Caco-2 (cell line): ENCODE measurements at regions of chr6 and their contacts with region 1.

Region 1: DNA sequence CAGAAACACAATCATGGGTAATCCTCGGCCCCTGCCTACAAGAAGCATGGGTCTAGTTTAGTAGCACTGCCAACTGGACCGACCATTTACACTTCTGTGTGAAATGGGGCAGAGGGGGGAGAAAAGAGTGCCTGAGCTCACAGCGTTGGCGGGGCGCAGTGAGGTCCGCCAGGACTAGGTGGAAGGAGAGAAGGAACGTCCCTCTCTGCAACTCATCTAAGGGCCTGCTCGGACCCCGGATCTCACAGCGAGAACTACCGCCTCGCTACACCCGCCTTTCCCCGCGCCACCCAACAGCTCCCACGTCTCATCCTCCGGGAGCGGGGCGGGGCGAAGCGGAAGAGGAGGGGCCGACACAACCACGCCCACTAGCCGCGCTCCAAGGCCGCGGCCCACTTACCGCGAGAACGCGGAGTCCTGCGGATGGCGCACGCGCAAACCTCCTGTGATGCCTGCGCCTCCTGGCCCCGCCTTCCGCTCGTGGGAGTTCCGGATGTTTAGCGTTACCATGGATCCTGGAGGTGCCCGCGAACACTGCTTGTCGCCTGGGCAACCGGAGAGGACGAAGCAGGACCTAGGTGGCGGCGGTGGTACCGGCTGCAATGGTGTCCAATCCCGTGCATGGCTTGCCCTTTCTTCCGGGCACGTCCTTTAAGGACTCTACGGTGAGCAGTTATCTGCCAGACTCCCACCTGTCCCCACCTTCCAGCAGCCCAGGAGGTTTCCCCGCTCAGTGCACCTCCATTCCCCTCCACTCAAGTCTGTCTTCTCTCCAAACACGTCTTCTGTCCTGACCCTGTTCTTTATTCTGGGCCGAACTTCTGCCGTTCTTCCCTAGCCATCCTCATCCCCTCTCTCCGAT is at the start of gene EFHC1:
- DNase-seq: peak; percentile 97 to 98
- H3K4me3 ChIP-seq: peak within 1 kb of the TSS; percentile 69
- H3K4me3 Mint-ChIP-seq: no peak within 1 kb of the TSS
- H3K27ac Mint-ChIP-seq: no peak within 1 kb of the TSS
- H3K4me1 ChIP-seq: peaks cover 32% of the 10 kb centered on the region
- H3K4me1 Mint-ChIP-seq: peaks cover 19% of the 10 kb centered on the region
- H3K27me3 ChIP-seq: no peaks in the 10 kb centered on the region
- H3K27me3 Mint-ChIP-seq: no peaks in the 10 kb centered on the region
- CTCF ChIP-seq: no peak
- total RNA-seq, gene EFHC1: 12.2 and 14.6 TPM in 2 replicates

Region 2: GRCh38 chr6:52407467-52407866 is 12.6 kb before region 1 on chr6:
- CTCF ChIA-PET with region 1: interaction called, 10 read pairs
- POLR2A ChIA-PET with region 1: no interaction called
- intact Hi-C with region 1: no loop called
- DNase-seq: peak in 1 of 2 experiments; percentile 50
- H3K4me3 ChIP-seq: no peak overlapping the region
- H3K4me3 Mint-ChIP-seq: no peak overlapping the region
- H3K27ac Mint-ChIP-seq: no peak overlapping the region
- H3K4me1 ChIP-seq: no peaks in the 10 kb centered on the region
- H3K4me1 Mint-ChIP-seq: peaks cover 2% of the 10 kb centered on the region
- H3K27me3 ChIP-seq: no peaks in the 10 kb centered on the region
- H3K27me3 Mint-ChIP-seq: no peaks in the 10 kb centered on the region
- CTCF ChIP-seq: peak; percentile 45 to 51

Region 3: DNA sequence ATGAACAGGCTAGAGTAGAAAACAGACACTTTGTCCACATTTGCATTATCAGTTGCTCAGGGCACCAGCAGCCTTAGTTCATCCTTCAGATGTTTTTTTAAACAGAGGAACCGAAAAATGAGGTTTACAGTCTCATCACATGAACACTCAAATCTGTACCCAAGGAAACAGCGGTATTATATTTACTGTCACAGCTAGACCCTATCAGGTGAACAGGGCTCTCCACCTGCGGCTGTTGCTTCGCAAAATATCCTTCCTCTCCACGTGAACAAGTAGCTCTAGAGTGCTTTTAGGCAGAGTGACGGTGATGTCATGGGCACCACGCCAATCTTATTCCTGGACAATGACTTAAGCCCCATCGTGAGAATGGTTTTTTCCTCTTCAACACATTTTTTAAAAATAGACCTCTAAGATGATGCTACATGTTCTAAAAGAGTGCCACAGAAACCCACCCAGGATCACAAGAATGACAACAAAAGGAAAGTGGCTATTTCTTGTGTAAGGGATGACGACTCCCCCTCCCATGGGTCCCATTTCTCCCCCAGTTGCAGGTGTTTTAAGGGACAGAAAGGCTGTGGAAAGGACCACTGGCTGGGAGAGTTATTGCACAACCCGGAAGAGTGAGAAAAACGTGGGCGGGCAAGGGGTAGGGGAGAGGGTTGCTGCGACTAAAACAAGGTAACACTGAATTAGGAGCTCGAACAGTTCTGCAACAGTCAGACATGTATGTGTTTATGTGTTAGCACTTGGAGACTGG is 77.8 kb after region 1 on chr6:
- CTCF ChIA-PET with region 1: no interaction called
- POLR2A ChIA-PET with region 1: no interaction called
- intact Hi-C with region 1: loop called (anchors 2 kb)
- DNase-seq: no peak
- H3K4me3 ChIP-seq: no peak overlapping the region
- H3K4me3 Mint-ChIP-seq: no peak overlapping the region
- H3K27ac Mint-ChIP-seq: no peak overlapping the region
- H3K4me1 ChIP-seq: no peaks in the 10 kb centered on the region
- H3K4me1 Mint-ChIP-seq: no peaks in the 10 kb centered on the region
- H3K27me3 ChIP-seq: no peaks in the 10 kb centered on the region
- H3K27me3 Mint-ChIP-seq: no peaks in the 10 kb centered on the region
- CTCF ChIP-seq: no peak

Region 4: DNA sequence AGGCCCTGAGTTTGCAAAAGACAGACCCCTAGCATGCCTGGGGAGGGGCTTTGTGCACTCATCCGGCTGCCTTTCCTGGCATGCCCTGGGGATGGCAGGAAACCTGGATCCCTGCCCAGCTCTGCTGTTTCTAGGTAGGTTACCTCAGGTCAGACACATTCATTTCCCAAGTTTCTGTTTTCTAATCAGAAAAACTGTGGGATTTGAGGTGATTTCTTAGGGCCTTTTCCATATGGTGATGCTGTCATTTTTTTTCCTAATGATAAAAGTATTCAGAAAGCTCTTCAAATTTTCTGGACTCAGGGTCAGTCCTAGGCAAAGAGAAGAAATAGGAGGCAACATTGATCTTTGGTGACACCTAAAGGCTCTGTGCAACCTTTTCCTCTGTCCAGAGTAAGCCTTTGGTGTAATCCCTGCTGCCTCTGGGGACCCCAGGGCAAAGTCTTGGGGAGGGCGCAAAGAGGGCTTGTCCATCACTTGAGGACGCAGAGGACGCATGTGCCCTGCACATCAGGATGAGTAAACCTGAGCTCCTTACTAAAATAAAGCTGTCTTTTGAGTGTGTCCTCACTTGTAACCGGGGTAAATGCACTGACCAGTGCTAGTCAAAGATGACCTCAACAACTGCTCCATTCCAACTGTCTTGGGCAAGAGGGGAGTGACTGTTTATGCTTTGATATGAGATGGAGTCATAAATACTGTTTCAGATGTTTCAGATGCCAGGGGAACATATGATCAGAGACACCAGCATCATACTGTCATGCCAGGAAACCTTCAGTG is 170.3 kb after region 1 on chr6:
- CTCF ChIA-PET with region 1: interaction called, 34 read pairs
- POLR2A ChIA-PET with region 1: interaction called, 7 read pairs
- intact Hi-C with region 1: loop called (anchors 1 kb)
- DNase-seq: peak in 1 of 2 experiments; percentile 58
- H3K4me3 ChIP-seq: no peak overlapping the region
- H3K4me3 Mint-ChIP-seq: no peak overlapping the region
- H3K27ac Mint-ChIP-seq: peak overlapping the region; percentile 10
- H3K4me1 ChIP-seq: peaks cover 41% of the 10 kb centered on the region
- H3K4me1 Mint-ChIP-seq: peaks cover 40% of the 10 kb centered on the region
- H3K27me3 ChIP-seq: no peaks in the 10 kb centered on the region
- H3K27me3 Mint-ChIP-seq: no peaks in the 10 kb centered on the region
- CTCF ChIP-seq: peak; percentile 31 to 54

Region 5: GRCh38 chr6:52598123-52598823 is 178.2 kb after region 1 on chr6:
- CTCF ChIA-PET with region 1: interaction called, 4 read pairs
- POLR2A ChIA-PET with region 1: no interaction called
- intact Hi-C with region 1: loop called (anchors 1 kb)
- DNase-seq: peak; percentile 83 to 85
- H3K4me3 ChIP-seq: no peak overlapping the region
- H3K4me3 Mint-ChIP-seq: peak overlapping the region; percentile 56
- H3K27ac Mint-ChIP-seq: peak overlapping the region; percentile 80
- H3K4me1 ChIP-seq: peaks cover 18% of the 10 kb centered on the region
- H3K4me1 Mint-ChIP-seq: peaks cover 26% of the 10 kb centered on the region
- H3K27me3 ChIP-seq: no peaks in the 10 kb centered on the region
- H3K27me3 Mint-ChIP-seq: no peaks in the 10 kb centered on the region
- CTCF ChIP-seq: peak; percentile 70 to 81

Region 6: DNA sequence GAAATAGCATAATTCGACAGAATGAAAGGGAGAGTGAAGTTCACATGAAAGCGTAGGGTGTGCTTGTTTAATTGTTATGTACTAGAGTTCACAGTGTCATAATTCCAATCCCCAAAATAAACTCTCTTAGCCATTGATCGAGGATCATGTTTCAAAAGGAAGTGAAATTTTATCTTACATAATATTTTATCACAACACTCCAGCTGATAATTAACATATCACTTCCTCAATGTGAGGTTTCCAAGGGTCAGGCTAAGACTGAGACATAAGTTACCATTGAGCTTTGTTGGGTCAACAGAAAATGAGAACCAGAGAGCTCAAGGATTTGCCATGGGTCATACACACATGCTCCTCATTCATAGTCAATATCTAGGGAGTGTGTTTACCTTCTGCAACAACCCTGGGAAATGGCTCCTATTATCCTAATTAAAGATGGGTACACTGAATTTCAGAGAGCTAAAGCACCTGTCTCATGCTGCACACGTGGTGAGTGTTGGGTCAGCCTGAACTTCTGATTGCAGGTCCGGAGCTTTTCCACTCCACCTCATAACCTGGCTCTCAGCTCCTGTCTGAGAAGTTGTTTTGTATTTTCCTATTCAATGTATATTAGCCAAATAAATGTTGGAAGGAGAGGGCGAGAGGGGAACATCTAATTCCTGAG is 340.2 kb after region 1 on chr6:
- CTCF ChIA-PET with region 1: no interaction called
- POLR2A ChIA-PET with region 1: no interaction called
- intact Hi-C with region 1: loop called (anchors 1 kb)
- DNase-seq: no peak
- H3K4me3 ChIP-seq: no peak overlapping the region
- H3K4me3 Mint-ChIP-seq: no peak overlapping the region
- H3K27ac Mint-ChIP-seq: no peak overlapping the region
- H3K4me1 ChIP-seq: peaks cover 6% of the 10 kb centered on the region
- H3K4me1 Mint-ChIP-seq: peaks cover 10% of the 10 kb centered on the region
- H3K27me3 ChIP-seq: no peaks in the 10 kb centered on the region
- H3K27me3 Mint-ChIP-seq: no peaks in the 10 kb centered on the region
- CTCF ChIP-seq: no peak